HEK293 (cell line): ENCODE measurements at regions of chr3 and their contacts with region 1.

Region 1: GRCh38 chr3:51498876-51499738 is 708 bp downstream of the DCAF1 start:
- H3K4me3 ChIP-seq: peak overlapping the region; percentile 95
- H3K27ac ChIP-seq: peak overlapping the region; percentile 63
- H3K4me1 ChIP-seq: no peaks in the 10 kb centered on the region
- CTCF ChIP-seq: no peak

Region 2: GRCh38 chr3:51391075-51391567 is 108.0 kb before region 1 on chr3 and contains the start of gene RBM15B:
- CTCF ChIA-PET with region 1: interaction called, 10 read pairs
- POLR2A ChIA-PET with region 1: interaction called, 8 read pairs
- H3K4me3 ChIP-seq: peak within 1 kb of the TSS; percentile 82
- H3K27ac ChIP-seq: peak within 1 kb of the TSS; percentile 87
- H3K4me1 ChIP-seq: no peaks in the 10 kb centered on the region; the same call in 1 of the 2 replicates
- CTCF ChIP-seq: peak; percentile 90

Region 3: DNA sequence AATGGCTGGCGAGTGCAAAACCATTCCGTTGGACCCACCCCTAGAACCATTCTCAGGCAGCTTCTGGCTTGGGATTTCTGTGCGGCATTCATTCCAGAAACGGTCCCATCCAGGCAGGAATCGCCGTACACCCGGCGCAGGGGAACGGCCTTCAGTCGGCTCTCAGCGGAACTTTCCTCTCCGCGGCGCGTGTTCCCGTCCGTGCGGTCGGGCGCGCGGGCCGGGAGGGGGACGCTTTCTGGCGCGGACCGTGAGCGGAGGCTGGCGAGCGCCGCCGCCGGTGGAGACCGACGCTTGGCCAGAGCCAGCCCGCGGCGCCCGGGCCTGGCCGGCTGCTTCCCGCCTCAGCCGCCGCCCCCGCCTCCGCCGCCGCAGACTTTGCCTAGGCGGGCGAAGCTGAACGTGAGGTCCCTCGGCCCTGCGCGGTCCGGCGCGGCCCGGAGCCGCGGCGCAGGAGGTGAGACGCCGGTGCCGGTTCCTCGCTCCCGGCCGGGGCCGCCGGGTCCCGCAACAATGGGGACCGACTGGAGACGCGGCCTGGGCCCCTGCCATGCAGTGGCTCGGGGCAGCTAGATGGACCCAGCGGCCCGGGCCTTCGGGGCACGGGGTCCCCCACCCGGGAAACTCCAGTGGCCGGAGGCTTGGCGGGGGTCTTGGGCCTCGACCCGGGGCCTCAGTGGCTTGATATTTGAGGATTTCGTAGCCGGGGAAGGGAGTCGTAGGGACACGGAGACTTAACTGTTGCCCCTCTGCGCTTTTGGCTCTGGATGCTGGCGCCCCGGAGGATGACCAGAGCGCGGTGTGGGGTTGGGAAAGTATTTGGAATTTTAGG is 39.6 kb after region 1 on chr3 and contains the start of gene RAD54L2:
- CTCF ChIA-PET with region 1: interaction called, 13 read pairs
- POLR2A ChIA-PET with region 1: interaction called, 17 read pairs
- H3K4me3 ChIP-seq: peak within 1 kb of the TSS; percentile 73
- H3K27ac ChIP-seq: peak within 1 kb of the TSS; percentile 76
- H3K4me1 ChIP-seq: no peaks in the 10 kb centered on the region; the same call in 1 of the 2 replicates
- CTCF ChIP-seq: peak; percentile 59

Region 4: GRCh38 chr3:51670823-51671733 is 172.0 kb after region 1 on chr3 and contains the start of gene TEX264:
- CTCF ChIA-PET with region 1: interaction called, 61 read pairs
- POLR2A ChIA-PET with region 1: interaction called, 16 read pairs
- H3K4me3 ChIP-seq: peak within 1 kb of the TSS; percentile 80
- H3K27ac ChIP-seq: peak within 1 kb of the TSS; percentile 65; the same call in 1 of the 2 replicates
- H3K4me1 ChIP-seq: no peaks in the 10 kb centered on the region
- CTCF ChIP-seq: no peak